ENCODE measurements at regions of chr1 and their contacts with region 1.

Region 1: GRCh38 chr1:165597883-165598675 is 33.0 kb upstream of the MGST3 start:
- DNase-seq: peak; percentile 98
- ATAC-seq: peak; percentile 100

Region 2: DNA sequence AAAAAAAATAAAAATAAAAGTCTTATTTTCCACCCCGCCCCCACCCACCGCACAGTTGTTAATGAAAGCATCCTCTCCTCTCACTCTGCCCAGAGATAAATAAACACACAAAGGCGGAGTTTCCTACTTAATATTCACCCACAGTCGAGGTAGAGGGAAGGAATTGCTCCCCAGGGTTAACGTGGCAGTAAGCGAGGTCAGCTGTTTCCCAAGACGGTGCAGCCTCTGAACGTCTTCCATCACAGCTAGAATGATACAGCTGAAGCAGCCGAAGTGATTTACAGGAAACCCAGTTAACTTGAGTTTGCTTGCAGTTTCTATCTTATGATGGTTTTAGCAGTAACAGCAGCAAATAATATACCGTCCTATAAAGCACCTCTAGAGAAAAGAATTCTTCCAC is 755.2 kb before region 1 on chr1:
- intact Hi-C with region 1: no loop called
- DNase-seq: no peak
- ATAC-seq: no peak

Region 3: DNA sequence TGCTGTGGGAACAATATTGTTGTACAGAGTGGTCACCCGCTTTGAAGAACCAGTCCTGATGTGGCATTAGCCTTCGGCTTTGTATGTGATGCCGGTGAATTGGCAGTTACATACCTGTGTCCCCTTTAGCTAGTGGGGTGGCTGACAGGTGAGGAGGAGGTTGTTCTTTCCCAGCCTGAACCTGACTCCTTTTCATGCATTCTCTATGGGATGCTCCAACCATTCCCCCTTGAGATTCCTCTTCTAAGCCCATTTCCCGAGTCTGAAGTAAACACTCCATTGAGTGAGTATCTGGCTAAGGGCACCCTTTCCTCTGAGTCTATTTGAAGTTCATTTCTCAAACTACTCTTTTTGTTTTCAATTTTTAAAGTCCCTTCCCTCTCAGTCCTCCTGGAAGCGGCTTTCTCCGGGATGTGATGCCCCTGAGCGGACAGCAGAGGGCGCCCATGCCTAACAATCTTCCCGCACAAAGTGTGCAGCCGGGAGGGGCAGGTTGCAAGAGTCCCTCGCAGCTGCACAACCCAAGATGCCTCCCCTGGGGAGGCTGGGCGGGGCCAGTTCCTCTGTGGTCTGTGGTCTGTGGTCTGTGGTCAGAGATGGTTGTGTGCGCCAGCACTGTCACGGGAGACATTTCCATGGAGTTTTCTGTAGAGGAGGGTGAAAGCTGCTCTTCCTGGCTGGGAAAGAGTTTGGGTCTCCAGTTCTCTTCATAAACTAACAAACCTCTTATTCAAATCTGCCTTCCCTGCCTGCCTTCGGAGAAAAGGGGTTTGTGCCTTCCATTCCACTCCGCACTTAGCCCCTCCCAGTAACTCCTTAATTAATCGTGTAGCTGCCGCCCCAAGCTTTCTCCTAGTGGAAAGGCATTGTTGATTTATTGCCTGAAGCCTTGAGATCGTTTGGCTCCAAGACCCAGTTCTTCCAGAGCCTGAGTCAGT is 205.2 kb before region 1 on chr1:
- intact Hi-C with region 1: loop called (anchors 2 kb)
- DNase-seq: peak; percentile 93
- ATAC-seq: peak; percentile 91

Region 4: DNA sequence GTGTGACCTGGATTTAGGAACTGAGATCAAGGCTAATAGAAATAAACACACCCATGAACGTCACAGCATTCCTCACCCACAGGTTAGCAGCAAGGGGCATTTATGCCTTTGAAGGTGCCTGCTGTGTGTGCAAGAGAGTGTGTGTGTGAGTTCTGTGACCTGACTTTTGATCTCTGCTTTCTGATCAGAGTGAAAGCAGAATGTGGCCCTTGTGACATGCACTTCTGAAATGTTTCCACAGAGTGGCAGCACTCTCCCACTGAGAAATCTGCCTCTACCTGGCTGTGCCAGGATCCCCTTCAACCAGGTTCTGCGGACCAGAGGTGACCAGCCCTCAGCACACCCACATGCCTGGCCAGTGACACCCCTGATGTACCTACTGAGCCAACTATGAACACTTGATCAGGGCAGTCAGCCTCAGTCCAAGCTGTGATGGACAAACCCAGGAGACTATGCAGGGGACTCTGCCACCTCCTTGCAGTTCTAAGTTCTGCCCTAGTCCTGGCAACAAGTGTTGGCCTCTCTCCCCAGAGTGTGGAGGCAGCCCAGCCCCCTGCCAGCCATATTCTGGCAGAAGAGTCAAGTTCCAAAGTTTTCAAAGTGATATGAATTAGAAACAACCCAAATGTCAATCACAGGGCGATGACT is 194.1 kb before region 1 on chr1:
- intact Hi-C with region 1: loop called (anchors 1 kb)
- DNase-seq: no peak
- ATAC-seq: peak; percentile 40

Region 5: DNA sequence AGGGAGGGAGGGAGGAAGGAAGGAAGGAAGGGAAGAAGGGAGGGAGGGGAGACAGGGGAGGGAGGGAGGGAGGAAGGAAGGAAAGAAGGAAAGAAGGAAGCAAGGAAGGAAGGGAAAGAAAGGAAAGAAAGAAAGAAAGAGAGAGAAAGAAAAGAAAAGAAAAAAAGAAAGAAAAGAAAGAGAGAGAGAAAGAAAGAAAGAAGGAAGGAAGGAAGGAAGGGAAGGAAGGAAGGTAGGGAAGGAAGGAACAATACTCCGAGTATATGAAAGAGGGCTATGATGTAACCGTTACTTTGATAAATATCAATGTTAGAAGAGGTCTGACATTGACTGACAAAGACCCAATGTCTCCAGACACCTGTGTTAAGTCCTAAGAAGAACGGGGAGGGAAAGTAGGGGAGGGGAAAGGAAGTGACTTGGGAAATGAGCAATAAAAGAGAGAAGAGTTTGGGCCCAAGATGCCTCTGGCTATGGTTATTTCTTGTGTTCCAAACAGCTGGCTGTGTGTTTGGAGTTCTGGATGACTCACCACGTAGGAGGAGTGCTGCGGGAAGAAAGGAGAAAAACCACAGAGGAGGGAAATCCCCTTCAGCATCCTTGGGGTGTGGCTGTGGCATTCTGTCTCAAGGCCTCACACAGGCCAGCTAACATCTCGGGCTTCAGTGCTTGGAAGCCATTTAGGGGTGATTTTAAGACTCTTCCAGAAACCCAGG is 116.1 kb before region 1 on chr1:
- intact Hi-C with region 1: no loop called
- DNase-seq: no peak
- ATAC-seq: peak; percentile 93

Region 6: GRCh38 chr1:165697881-165698760 is 100.0 kb after region 1 on chr1 and contains the start of gene ALDH9A1:
- intact Hi-C with region 1: loop called (anchors 5 kb)
- DNase-seq: peak; percentile 95
- ATAC-seq: peak; percentile 98
- total RNA-seq, gene ALDH9A1: 57.3 TPM

Region 7: GRCh38 chr1:165914136-165914798 is 316.2 kb after region 1 on chr1:
- intact Hi-C with region 1: loop called (anchors 1 kb)
- DNase-seq: no peak
- ATAC-seq: peak; percentile 77

Region 8: GRCh38 chr1:166193057-166193698 is 595.1 kb after region 1 on chr1:
- intact Hi-C with region 1: no loop called
- DNase-seq: no peak
- ATAC-seq: no peak